Posterior vena cava (tissue), 2 donors: ENCODE measurements at regions of chr15 and their contacts with region 1.

Region 1: GRCh38 chr15:42056934-42057779 is 36.3 kb upstream of the PLA2G4E start:
- DNase-seq: no peak

Region 2: DNA sequence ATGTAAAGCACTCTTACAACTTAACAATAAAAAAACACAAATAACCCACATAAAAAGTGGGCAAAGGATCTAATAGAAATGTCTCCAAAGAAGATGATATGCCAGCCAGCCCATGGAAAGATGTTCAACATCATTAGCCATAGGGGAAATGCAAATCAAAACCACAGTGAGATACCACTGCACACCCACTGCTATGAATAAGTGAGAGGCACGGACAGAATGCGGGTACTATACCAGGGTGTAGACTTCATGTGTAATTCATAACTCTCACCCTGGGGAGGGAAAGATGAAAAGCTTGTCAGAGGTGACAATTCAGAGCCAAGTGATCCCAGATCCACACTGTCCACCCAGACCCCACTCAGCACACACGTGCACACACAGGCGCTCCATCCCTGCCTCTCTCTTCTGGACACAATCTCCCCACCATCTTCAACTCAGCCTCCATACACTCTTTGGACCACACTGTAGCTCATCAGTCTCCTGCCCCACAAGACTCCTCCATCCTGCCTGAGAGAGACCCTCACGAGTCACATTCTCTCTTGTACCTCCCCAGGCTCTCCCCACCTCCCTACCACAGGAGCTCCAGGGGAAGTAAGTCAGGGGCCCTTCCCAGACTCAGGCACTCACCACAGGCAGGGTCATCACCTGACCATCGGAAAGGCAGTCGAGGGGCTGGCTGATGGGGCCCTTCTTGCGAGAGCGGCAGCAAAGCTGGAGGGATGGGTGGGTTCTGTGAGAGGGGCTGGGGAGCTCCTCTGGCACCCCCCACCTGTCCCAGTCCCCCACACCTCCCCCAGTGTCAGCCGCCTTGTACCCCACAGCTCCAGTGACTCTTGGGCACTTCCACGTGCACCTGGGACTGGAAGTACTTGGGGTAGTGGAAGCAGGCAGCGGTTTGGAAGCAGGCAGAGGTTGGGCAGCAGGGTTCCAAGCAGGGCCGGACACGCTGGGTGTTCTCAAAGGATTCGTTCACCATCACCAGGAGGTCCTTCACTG is 57.6 kb before region 1 on chr15:
- intact Hi-C with region 1: loop called in 1 of 2 experiments (anchors 10 kb)
- DNase-seq: no peak

Region 3: GRCh38 chr15:42033214-42033873 is 23.8 kb before region 1 on chr15:
- intact Hi-C with region 1: loop called in 1 of 2 experiments (anchors 1 kb)
- DNase-seq: no peak